K562 (cell line): ENCODE measurements at regions of chr12 and their contacts with region 1.

Region 1: DNA sequence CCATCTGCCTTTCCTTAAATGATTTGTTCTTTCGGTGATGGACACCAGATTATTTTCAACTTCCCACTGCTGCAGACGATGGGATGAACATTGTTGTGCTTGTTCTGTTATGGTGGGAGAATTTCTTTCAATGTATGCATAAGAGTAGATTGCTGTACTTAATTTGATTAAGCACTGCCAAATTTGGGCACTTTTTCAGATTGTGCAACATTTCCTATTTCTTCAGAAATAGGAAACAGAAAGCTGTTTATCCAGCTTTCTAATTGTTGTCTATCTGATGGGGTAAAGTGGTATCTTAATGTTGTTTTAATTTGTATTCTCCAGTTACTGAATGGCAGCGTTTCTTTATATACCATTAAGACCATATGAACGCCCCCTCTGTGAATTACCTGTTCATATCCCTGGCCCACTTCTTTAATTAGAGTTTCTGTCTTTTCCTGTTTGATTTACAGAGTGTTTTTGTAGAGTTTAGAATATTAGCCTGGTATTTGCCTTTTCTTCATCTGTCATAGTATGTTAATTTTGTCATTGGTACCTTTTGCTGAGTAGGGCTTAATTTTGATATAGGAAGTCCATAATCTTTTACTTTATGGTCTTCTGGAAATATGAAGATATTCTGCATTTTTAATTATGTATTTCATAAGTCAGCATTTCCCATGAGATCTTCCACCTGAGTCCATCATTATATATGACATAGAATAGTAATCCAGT is 59.6 kb downstream of the DIP2B start:
- DNase-seq: no peak
- ATAC-seq: no peak
- H3K4me3 ChIP-seq: no peak overlapping the region
- H3K27ac ChIP-seq: peak overlapping the region; percentile 84; the same call in 2 of the 3 replicates
- H3K4me1 ChIP-seq: peaks cover 16 to 27% of the 10 kb centered on the region in 2 experiments
- H3K27me3 ChIP-seq: no peaks in the 10 kb centered on the region
- CTCF ChIP-seq: no peak
- EP300 ChIP-seq: no peak
- POLR2A ChIP-seq: no peak
- RAD21 ChIP-seq: no peak

Region 2: DNA sequence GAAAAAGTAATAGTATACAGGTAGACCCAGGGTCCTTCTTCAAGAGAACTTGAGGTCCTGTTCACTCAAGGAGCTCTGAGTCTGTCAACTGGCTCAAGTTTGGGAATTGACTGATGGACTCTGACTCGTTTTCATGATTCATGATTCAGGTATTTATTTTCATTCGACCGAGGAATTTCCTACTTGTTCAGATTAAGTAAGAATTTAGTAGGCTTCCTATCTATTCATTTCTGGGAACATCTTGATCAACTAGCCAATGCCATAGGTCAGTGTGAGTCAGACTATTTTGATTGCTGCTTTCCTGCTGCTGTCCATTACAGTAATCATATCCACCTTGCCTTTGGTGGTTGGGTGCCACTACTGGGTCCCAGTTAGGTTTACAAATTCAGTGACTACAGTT is 174.1 kb before region 1 on chr12:
- CTCF ChIA-PET with region 1: no interaction called
- POLR2A ChIA-PET with region 1: no interaction called
- in situ Hi-C with region 1: no loop called
- intact Hi-C with region 1: no loop called
- DNase-seq: no peak
- ATAC-seq: no peak
- H3K4me3 ChIP-seq: no peak overlapping the region
- H3K27ac ChIP-seq: no peak overlapping the region
- H3K4me1 ChIP-seq: peaks cover 0 to 5% of the 10 kb centered on the region in 2 experiments; a peak in 2 of 5 replicates
- H3K27me3 ChIP-seq: no peaks in the 10 kb centered on the region
- CTCF ChIP-seq: no peak
- EP300 ChIP-seq: no peak
- POLR2A ChIP-seq: no peak
- RAD21 ChIP-seq: no peak

Region 3: GRCh38 chr12:50550530-50551223 is 13.7 kb before region 1 on chr12:
- CTCF ChIA-PET with region 1: no interaction called
- POLR2A ChIA-PET with region 1: interaction called, 23 read pairs
- in situ Hi-C with region 1: no loop called
- intact Hi-C with region 1: no loop called
- DNase-seq: peak; percentile 31 to 78 (median 49)
- ATAC-seq: peak; percentile 92
- H3K4me3 ChIP-seq: no peak overlapping the region
- H3K27ac ChIP-seq: peak overlapping the region; percentile 67; the same call in 2 of the 3 replicates
- H3K4me1 ChIP-seq: peaks cover 28 to 41% of the 10 kb centered on the region in 2 experiments
- H3K27me3 ChIP-seq: no peaks in the 10 kb centered on the region
- CTCF ChIP-seq: no peak
- EP300 ChIP-seq: peak; percentile 34; the same call in 1 of the 2 replicates
- POLR2A ChIP-seq: no peak
- RAD21 ChIP-seq: peak in 1 of 2 experiments; percentile 18; a peak in 1 of 4 replicates

Region 4: GRCh38 chr12:50574601-50575348 is 10.4 kb after region 1 on chr12:
- CTCF ChIA-PET with region 1: no interaction called
- POLR2A ChIA-PET with region 1: interaction called, 15 read pairs
- in situ Hi-C with region 1: no loop called
- intact Hi-C with region 1: no loop called
- DNase-seq: no peak
- ATAC-seq: no peak
- H3K4me3 ChIP-seq: no peak overlapping the region
- H3K27ac ChIP-seq: no peak overlapping the region
- H3K4me1 ChIP-seq: peaks cover 0 to 4% of the 10 kb centered on the region in 2 experiments; a peak in 3 of 5 replicates
- H3K27me3 ChIP-seq: no peaks in the 10 kb centered on the region
- CTCF ChIP-seq: no peak
- EP300 ChIP-seq: no peak
- POLR2A ChIP-seq: no peak
- RAD21 ChIP-seq: no peak

Region 5: DNA sequence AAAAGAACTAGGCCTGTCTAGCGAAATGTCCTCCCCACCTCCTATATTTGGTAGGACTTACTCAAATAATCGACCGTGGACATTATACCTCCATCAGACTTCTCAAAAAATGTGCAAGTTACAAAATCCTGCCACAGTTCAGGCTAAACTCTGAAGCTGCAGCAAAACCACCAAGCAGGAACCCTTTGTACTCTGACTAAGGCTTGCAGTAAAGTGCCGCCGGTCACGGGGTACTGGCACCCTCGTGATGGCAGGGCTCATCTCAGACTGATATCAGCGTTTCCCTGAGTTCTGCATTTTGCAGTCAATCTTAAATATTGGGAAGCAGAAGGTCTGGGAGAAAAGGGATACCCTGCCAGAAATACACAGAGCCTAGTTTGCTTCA is 444.7 kb after region 1 on chr12:
- CTCF ChIA-PET with region 1: no interaction called
- POLR2A ChIA-PET with region 1: no interaction called
- in situ Hi-C with region 1: no loop called
- intact Hi-C with region 1: no loop called
- DNase-seq: no peak
- ATAC-seq: no peak
- H3K4me3 ChIP-seq: no peak overlapping the region
- H3K27ac ChIP-seq: no peak overlapping the region
- H3K4me1 ChIP-seq: peaks cover 3 to 13% of the 10 kb centered on the region in 2 experiments; a peak in 4 of 5 replicates
- H3K27me3 ChIP-seq: no peaks in the 10 kb centered on the region
- CTCF ChIP-seq: no peak
- EP300 ChIP-seq: no peak
- POLR2A ChIP-seq: no peak
- RAD21 ChIP-seq: no peak